ENCODE measurements at regions of chr5 and their contacts with region 1.

Region 1: GRCh38 chr5:1155191-1156032 is 43.5 kb upstream of the SLC12A7 start:
- DNase-seq: peak in 1 of 6 donors; percentile 73
- ATAC-seq: peak in 3 of 4 donors; percentile 19 to 55 (median 45)
- H3K4me3 ChIP-seq: peak overlapping the region in 3 of 4 donors; percentile 7 to 36 (median 32)
- H3K27ac ChIP-seq: peak overlapping the region in 3 of 4 donors; percentile 33 to 55 (median 35)
- H3K4me1 ChIP-seq: no peaks in the 10 kb centered on the region
- H3K27me3 ChIP-seq: peaks cover 0 to 6% (median 0%) of the 10 kb centered on the region in 4 donors
- CTCF ChIP-seq: no peak

Region 2: GRCh38 chr5:926417-927171 is 228.8 kb before region 1 on chr5:
- intact Hi-C with region 1: loop called in 1 of 3 experiments (anchors 5 kb)
- DNase-seq: peak in 5 of 6 donors; percentile 30 to 78 (median 63)
- ATAC-seq: peak; percentile 71 to 88 (median 84)
- H3K4me3 ChIP-seq: peak overlapping the region in 3 of 4 donors; percentile 16 to 43 (median 26)
- H3K27ac ChIP-seq: no peak overlapping the region
- H3K4me1 ChIP-seq: peaks cover 0 to 4% (median 3%) of the 10 kb centered on the region in 3 donors
- H3K27me3 ChIP-seq: no peaks in the 10 kb centered on the region
- CTCF ChIP-seq: peak in 3 of 4 donors; percentile 12 to 41 (median 16)

Measured in pancreas (tissue), 10 donors.